Caco-2 (cell line): ENCODE measurements at regions of chr7 and their contacts with region 1.

Region 1: GRCh38 chr7:92621026-92621540 is 30.9 kb upstream of the FAM133B start:
- DNase-seq: peak; percentile 60 to 69
- H3K4me3 ChIP-seq: no peak overlapping the region
- H3K4me3 Mint-ChIP-seq: no peak overlapping the region
- H3K27ac Mint-ChIP-seq: peak overlapping the region; percentile 13
- H3K4me1 ChIP-seq: no peaks in the 10 kb centered on the region
- H3K4me1 Mint-ChIP-seq: peaks cover 7% of the 10 kb centered on the region
- H3K27me3 ChIP-seq: no peaks in the 10 kb centered on the region
- H3K27me3 Mint-ChIP-seq: no peaks in the 10 kb centered on the region
- CTCF ChIP-seq: peak; percentile 66 to 68

Region 2: GRCh38 chr7:92134271-92135051 is 486.6 kb before region 1 on chr7 and contains the start of gene CYP51A1:
- CTCF ChIA-PET with region 1: no interaction called
- POLR2A ChIA-PET with region 1: no interaction called
- intact Hi-C with region 1: no loop called
- DNase-seq: peak; percentile 93 to 94
- H3K4me3 ChIP-seq: peak within 1 kb of the TSS; percentile 99
- H3K4me3 Mint-ChIP-seq: peak within 1 kb of the TSS; percentile 95
- H3K27ac Mint-ChIP-seq: peak within 1 kb of the TSS; percentile 98
- H3K4me1 ChIP-seq: peaks cover 9% of the 10 kb centered on the region; the same call in 1 of the 2 replicates
- H3K4me1 Mint-ChIP-seq: peaks cover 18% of the 10 kb centered on the region
- H3K27me3 ChIP-seq: no peaks in the 10 kb centered on the region
- H3K27me3 Mint-ChIP-seq: no peaks in the 10 kb centered on the region
- CTCF ChIP-seq: peak in 1 of 2 experiments; percentile 6
- total RNA-seq, gene CYP51A1: 151 and 153 TPM in 2 replicates

Region 3: GRCh38 chr7:92645114-92646061 is 24.3 kb after region 1 on chr7:
- CTCF ChIA-PET with region 1: no interaction called
- POLR2A ChIA-PET with region 1: no interaction called
- intact Hi-C with region 1: loop called (anchors 1 kb)
- DNase-seq: peak; percentile 67 to 81
- H3K4me3 ChIP-seq: no peak overlapping the region
- H3K4me3 Mint-ChIP-seq: peak overlapping the region; percentile 47
- H3K27ac Mint-ChIP-seq: peak overlapping the region; percentile 27
- H3K4me1 ChIP-seq: peaks cover 38% of the 10 kb centered on the region
- H3K4me1 Mint-ChIP-seq: peaks cover 13% of the 10 kb centered on the region
- H3K27me3 ChIP-seq: no peaks in the 10 kb centered on the region
- H3K27me3 Mint-ChIP-seq: no peaks in the 10 kb centered on the region
- CTCF ChIP-seq: no peak

Region 4: DNA sequence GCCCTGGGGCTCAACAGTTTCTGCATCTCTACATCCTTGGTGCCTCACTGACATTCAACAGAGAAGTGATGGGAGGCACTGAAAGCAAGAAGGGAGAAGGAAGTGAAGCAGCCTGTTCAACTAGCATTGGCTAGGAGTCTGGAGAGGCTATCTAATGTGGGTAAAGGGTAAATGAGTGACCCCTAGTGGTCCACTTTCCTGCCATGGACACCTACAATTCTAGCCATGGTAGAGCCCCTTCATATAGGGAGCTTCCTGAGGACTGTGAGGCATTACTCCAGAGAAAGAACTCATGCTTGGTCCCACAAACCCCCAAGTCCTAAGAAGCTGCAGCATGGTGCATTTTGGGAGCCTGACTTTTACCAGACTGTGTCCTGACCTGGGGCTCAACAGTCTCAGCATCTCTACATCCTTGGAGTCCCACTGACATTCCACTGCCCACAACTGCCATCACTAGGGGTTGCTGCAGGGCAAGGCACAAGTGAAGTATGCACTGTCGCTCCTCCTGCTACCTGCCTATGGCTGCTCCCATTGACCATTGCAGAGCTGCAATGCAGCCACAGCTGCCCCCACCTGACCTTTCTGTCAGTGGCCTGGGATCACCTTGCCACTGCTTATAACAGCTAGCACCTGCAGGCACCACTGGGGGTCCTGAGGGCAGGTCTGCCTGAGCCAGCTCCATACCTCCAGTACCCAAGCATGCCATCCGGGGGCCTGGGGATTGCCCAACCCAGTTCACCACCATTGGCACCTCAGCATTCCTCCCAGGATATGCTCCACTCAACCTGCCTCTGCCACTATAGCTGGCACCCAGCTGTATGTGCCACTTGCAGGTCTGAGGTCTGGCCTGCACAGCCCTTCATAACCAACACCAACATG is 259.4 kb after region 1 on chr7:
- CTCF ChIA-PET with region 1: no interaction called
- POLR2A ChIA-PET with region 1: no interaction called
- intact Hi-C with region 1: loop called (anchors 1 kb)
- DNase-seq: peak; percentile 66
- H3K4me3 ChIP-seq: no peak overlapping the region
- H3K4me3 Mint-ChIP-seq: no peak overlapping the region
- H3K27ac Mint-ChIP-seq: no peak overlapping the region
- H3K4me1 ChIP-seq: no peaks in the 10 kb centered on the region
- H3K4me1 Mint-ChIP-seq: peaks cover 6% of the 10 kb centered on the region
- H3K27me3 ChIP-seq: no peaks in the 10 kb centered on the region
- H3K27me3 Mint-ChIP-seq: peaks cover 7% of the 10 kb centered on the region
- CTCF ChIP-seq: peak; percentile 44 to 54

Region 5: GRCh38 chr7:92988051-92988450 is 367.0 kb after region 1 on chr7:
- CTCF ChIA-PET with region 1: no interaction called
- POLR2A ChIA-PET with region 1: no interaction called
- intact Hi-C with region 1: loop called (anchors 1 kb)
- DNase-seq: peak in 1 of 2 experiments; percentile 55
- H3K4me3 ChIP-seq: no peak overlapping the region
- H3K4me3 Mint-ChIP-seq: no peak overlapping the region
- H3K27ac Mint-ChIP-seq: peak overlapping the region; percentile 32
- H3K4me1 ChIP-seq: 0 out of 2 replicates have a peak, but pooled peaks cover 10% of the 10 kb centered on the region
- H3K4me1 Mint-ChIP-seq: peaks cover 11% of the 10 kb centered on the region
- H3K27me3 ChIP-seq: no peaks in the 10 kb centered on the region
- H3K27me3 Mint-ChIP-seq: peaks cover 3% of the 10 kb centered on the region
- CTCF ChIP-seq: peak; percentile 39 to 53

Region 6: DNA sequence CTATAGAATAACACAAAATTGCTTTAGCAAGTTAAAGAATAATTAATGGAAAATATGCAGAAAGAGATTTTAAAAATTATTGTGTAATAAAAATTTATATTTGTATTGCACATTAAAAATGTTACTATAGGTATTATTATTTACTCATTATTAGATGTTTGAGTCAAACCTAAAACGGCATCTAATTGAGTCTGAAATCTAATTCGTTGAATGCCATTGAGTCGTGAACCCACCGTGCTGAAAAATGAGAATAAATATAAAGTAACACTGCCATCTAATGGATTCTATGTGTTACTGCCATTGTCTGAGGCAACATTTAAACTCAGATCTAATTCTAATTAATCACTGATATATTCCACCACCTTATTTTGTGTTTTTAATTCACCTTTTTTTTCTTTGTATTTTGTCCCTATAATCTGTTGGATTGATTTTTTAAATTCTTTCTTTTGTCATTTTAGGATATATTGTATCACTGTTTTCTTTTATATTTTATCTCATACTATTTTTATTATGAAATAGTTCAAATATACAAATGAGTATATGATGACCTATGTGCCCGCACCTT is 434.5 kb after region 1 on chr7:
- CTCF ChIA-PET with region 1: no interaction called
- POLR2A ChIA-PET with region 1: no interaction called
- intact Hi-C with region 1: loop called (anchors 1 kb)
- DNase-seq: peak in 1 of 2 experiments; percentile 21
- H3K4me3 ChIP-seq: no peak overlapping the region
- H3K4me3 Mint-ChIP-seq: no peak overlapping the region
- H3K27ac Mint-ChIP-seq: no peak overlapping the region
- H3K4me1 ChIP-seq: no peaks in the 10 kb centered on the region
- H3K4me1 Mint-ChIP-seq: no peaks in the 10 kb centered on the region
- H3K27me3 ChIP-seq: no peaks in the 10 kb centered on the region
- H3K27me3 Mint-ChIP-seq: no peaks in the 10 kb centered on the region
- CTCF ChIP-seq: peak; percentile 50 to 76